Caco-2 (cell line): ENCODE measurements at regions of chr1 and their contacts with region 1.

Region 1: DNA sequence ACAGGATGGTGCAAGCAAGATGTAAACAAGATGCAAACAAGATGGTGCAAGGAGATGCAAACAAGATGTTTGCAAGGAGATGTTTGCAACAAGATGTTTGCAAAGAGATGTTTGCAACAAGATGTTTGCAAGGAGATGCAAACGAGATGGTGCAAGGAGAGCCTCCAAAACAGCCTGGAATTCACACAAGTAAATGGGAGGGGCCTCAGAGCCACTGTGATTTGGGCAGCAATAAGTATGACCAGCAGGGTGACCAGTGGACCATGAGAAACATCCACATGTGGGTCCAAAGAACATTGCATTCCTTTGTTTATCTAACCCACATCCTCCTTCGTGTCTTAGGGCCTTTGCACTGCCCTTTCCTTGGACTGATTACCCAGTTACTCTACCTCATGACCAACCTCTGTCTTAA is 162.9 kb downstream of the PLPP3 start:
- DNase-seq: peak; percentile 25 to 63
- H3K4me3 ChIP-seq: no peak overlapping the region
- H3K4me3 Mint-ChIP-seq: no peak overlapping the region
- H3K27ac Mint-ChIP-seq: no peak overlapping the region
- H3K4me1 ChIP-seq: peaks cover 44% of the 10 kb centered on the region
- H3K4me1 Mint-ChIP-seq: peaks cover 37% of the 10 kb centered on the region
- H3K27me3 ChIP-seq: no peaks in the 10 kb centered on the region
- H3K27me3 Mint-ChIP-seq: no peaks in the 10 kb centered on the region
- CTCF ChIP-seq: peak in 1 of 2 experiments; percentile 13

Region 2: DNA sequence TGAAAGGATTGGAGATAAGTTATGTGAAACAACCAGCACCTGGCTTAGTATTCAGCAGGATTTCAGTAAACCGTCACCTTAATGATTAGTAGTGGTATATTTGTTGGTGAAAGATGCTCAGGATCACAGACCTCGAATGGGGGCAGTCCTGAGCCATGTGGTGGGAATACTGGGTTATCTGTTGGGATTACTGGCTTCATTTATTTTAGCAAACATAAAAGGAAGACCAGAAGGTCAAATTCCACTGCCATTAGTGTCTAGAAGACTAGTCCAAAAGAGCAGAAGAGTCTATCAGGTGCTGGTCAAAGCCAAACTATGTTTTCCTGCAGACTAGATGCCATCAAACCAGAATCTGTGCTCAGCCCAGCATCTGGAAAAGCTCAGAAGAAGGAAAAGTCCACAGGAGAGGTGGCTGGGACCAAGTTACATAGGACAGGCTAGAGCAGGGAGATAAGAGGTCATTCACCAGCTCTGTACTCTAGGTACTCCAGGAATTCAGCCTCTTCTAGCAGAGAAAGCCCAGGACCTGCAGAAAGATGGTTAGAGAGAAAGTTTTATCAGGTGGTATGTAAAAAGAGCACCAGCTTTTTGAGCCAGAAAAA is 180.5 kb before region 1 on chr1:
- CTCF ChIA-PET with region 1: no interaction called
- POLR2A ChIA-PET with region 1: no interaction called
- intact Hi-C with region 1: loop called (anchors 1 kb)
- DNase-seq: peak; percentile 53 to 54
- H3K4me3 ChIP-seq: no peak overlapping the region
- H3K4me3 Mint-ChIP-seq: no peak overlapping the region
- H3K27ac Mint-ChIP-seq: no peak overlapping the region
- H3K4me1 ChIP-seq: peaks cover 11% of the 10 kb centered on the region
- H3K4me1 Mint-ChIP-seq: peaks cover 17% of the 10 kb centered on the region
- H3K27me3 ChIP-seq: no peaks in the 10 kb centered on the region
- H3K27me3 Mint-ChIP-seq: no peaks in the 10 kb centered on the region
- CTCF ChIP-seq: no peak

Region 3: DNA sequence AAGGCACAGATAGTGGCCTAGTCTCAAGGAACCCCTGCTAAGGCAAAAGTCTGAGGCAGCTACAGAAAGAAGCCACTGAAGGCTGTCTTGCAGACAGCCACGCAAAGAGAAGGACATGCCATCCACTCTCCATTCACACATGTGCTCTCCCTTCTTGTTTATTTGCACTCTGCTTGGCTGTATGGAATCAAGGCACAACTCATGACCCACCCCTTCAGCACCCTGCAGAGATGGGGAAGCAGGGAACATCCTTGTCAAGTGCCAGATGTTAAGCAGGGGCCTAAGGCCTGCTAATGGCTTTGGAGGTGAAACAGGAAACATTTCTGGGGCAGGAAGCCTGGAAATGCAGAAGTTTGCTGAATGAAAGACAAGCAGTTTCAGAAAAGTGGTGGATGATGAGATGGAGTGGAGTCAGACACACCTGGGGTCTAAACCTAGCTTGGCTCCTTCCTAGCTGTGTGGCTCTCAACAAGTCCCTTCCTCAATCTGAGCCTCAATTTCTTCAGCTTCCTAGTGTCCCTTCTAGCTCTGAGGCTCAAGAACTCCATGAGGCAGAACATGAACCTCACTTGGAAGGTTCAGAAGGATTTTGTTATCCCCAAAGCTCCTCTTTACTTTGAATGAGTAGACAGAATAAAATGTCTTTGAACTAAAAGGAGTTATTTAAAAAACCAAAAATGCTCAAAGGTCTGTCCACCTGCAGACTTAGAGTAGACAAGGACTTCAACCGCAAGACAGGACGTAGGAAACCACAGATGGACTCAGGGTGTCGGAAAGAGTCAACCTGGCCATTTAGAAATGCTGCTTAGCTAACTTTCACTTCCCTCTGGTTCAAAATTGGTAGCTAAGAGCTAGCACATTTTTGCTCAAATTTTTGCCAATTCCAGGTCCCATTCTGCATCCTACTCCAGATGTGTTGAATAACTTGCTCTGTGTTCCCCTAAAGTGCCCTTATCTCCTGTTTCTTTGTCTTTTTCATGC is 120.2 kb before region 1 on chr1:
- CTCF ChIA-PET with region 1: no interaction called
- POLR2A ChIA-PET with region 1: no interaction called
- intact Hi-C with region 1: loop called (anchors 1 kb)
- DNase-seq: no peak
- H3K4me3 ChIP-seq: no peak overlapping the region
- H3K4me3 Mint-ChIP-seq: peak overlapping the region; percentile 22
- H3K27ac Mint-ChIP-seq: peak overlapping the region; percentile 93
- H3K4me1 ChIP-seq: peaks cover 58% of the 10 kb centered on the region
- H3K4me1 Mint-ChIP-seq: peaks cover 29% of the 10 kb centered on the region
- H3K27me3 ChIP-seq: no peaks in the 10 kb centered on the region
- H3K27me3 Mint-ChIP-seq: no peaks in the 10 kb centered on the region
- CTCF ChIP-seq: no peak

Region 4: DNA sequence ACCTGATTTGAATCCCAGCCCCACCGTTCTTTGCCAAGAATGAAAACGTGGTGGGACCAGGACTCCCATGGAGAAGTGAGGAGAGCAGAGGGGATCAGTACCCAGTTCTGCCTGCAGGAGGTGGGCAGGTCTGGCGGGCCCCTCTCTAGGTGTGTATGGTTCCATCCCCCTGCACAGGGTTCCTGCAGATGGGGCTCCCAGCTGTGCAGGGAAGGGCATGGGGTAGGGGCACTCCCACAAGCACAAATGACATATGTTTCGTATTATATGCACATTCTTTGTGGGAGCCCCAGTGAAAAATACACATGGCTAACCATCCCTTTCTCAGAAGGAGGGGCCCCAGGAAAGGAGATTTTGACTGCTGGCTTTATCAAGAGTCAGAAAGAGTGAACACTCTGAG is 18.3 kb after region 1 on chr1:
- CTCF ChIA-PET with region 1: no interaction called
- POLR2A ChIA-PET with region 1: interaction called, 3 read pairs
- intact Hi-C with region 1: loop called (anchors 2 kb)
- DNase-seq: peak in 1 of 2 experiments; percentile 36
- H3K4me3 ChIP-seq: no peak overlapping the region
- H3K4me3 Mint-ChIP-seq: peak overlapping the region; percentile 25
- H3K27ac Mint-ChIP-seq: peak overlapping the region; percentile 92
- H3K4me1 ChIP-seq: peaks cover 70% of the 10 kb centered on the region
- H3K4me1 Mint-ChIP-seq: peaks cover 62% of the 10 kb centered on the region
- H3K27me3 ChIP-seq: no peaks in the 10 kb centered on the region
- H3K27me3 Mint-ChIP-seq: no peaks in the 10 kb centered on the region
- CTCF ChIP-seq: no peak

Region 5: DNA sequence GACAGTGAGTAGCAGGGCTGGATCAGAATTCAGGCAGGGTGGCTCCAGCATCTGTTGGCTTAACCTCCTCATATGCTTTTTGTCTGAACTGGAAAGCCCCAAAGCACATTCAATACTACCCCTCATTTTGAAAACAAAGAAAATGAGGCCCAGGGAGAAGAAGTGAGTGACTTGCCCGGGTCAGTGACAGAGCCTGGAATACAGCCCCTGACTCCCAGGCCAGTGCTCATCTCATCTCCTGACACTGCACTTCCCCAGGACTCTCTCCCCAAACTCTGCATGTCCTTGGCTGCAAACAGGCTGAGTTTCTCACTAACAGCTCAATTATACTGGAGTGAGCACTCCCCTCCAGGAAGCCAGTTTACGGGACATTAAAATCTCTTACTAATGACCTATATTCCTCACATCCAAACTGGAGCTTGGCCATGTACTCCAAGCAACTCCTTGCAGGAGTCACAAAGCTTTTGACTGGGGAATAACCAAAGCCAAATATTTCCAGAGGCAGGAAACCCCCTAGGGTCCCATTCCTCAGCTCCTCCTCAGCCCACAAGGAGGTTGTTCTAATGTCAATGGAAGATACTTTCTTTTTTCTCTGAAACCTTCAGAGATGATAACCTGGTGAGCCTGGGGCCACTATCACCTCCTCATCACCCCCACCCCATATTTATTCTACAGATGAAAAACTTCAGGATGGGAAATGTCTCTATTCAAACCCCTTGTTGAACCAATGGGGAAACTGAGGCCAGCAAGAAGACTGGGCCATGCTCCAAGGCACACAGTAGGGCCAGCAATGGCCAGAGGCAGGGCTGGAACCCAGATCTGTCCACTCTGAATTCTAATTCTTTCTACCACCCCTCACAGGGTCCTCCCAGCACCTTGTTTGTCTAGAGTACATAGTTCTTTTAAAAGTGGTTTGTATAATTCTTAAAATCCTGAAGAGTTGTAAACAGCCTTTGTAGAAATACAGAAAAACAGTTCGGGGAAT is 35.8 kb after region 1 on chr1:
- CTCF ChIA-PET with region 1: no interaction called
- POLR2A ChIA-PET with region 1: no interaction called
- intact Hi-C with region 1: loop called (anchors 5 kb)
- DNase-seq: no peak
- H3K4me3 ChIP-seq: no peak overlapping the region
- H3K4me3 Mint-ChIP-seq: no peak overlapping the region
- H3K27ac Mint-ChIP-seq: peak overlapping the region; percentile 36
- H3K4me1 ChIP-seq: peaks cover 62% of the 10 kb centered on the region
- H3K4me1 Mint-ChIP-seq: peaks cover 34% of the 10 kb centered on the region
- H3K27me3 ChIP-seq: no peaks in the 10 kb centered on the region
- H3K27me3 Mint-ChIP-seq: no peaks in the 10 kb centered on the region
- CTCF ChIP-seq: no peak